ENCODE measurements at regions of chr12 and their contacts with region 1.

Region 1: DNA sequence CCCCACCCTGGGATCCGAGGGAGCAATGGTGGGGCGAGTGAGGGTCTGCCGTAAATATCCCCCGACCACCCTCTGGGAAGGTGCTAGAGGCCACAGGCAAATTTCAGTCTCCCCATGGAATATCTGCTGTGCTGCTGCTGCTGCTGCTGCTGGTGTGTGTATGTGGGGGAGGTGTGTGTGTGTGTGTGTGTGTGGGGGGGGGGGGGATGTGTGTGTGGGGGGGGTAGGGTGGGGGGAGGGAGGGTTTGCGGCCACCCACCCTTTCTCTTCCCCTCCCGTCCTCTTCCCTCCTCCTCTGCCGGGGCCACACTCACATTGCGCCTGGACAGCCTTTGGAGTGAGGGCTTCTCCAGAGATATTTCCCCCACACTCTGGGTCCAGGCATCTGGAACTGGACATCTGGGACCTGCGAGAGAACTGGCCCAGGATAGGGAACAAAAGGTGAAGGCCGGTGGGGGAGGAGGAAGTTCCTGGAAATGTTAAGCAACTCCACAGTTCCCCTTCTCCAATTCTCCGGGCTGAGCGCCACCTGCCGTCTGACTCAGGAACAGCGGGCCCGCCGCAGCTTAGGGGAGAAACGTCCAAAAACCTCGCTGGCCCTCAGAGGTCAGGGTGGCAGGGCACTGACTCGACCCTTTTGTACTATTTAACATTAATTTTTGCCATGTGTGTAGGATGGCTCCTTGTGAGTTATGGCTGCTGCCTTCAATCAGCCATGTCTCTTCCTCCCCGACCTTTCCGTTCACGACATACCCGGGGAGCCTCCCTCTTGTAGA is at the start of gene C1RL:
- DNase-seq: peak; percentile 87
- ATAC-seq: peak; percentile 47
- H3K4me3 Mint-ChIP-seq: peak within 1 kb of the TSS; percentile 88
- H3K27ac Mint-ChIP-seq: peak within 1 kb of the TSS; percentile 93
- H3K4me1 Mint-ChIP-seq: peaks cover 36% of the 10 kb centered on the region
- H3K27me3 Mint-ChIP-seq: no peaks in the 10 kb centered on the region
- CTCF ChIP-seq: peak; percentile 97
- total RNA-seq, gene C1RL: 10.5 to 11.8 TPM

Region 2: DNA sequence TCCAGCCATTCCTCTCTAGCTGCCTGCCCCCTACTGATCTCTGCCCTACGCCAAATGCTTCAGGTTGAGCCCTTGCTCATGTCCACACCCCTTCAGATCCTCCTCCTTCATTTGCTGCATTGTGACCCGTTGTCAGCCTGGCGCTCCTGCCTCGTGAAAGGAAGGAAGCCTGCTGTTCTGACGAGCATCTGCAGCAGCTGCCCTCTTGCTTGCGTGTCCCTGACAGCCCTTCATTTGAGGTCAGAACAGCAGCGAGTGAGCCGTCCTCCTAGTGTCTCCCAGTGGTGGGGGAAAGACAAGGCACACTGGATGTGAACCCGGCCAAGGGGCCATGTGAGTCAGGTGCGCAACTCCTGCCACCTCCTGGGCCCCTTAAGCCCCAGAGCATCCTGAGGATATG is 405.4 kb before region 1 on chr12:
- CTCF ChIA-PET with region 1: no interaction called
- POLR2A ChIA-PET with region 1: no interaction called
- intact Hi-C with region 1: no loop called
- DNase-seq: peak; percentile 43
- ATAC-seq: peak; percentile 38
- H3K4me3 Mint-ChIP-seq: no peak overlapping the region
- H3K27ac Mint-ChIP-seq: no peak overlapping the region
- H3K4me1 Mint-ChIP-seq: peaks cover 14% of the 10 kb centered on the region
- H3K27me3 Mint-ChIP-seq: peaks cover 46% of the 10 kb centered on the region
- CTCF ChIP-seq: no peak

Region 3: GRCh38 chr12:6978609-6979011 is 130.4 kb before region 1 on chr12:
- CTCF ChIA-PET with region 1: interaction called, 5 read pairs
- POLR2A ChIA-PET with region 1: interaction called, 12 read pairs
- intact Hi-C with region 1: no loop called
- DNase-seq: no peak
- ATAC-seq: no peak
- H3K4me3 Mint-ChIP-seq: no peak overlapping the region
- H3K27ac Mint-ChIP-seq: no peak overlapping the region
- H3K4me1 Mint-ChIP-seq: peaks cover 18% of the 10 kb centered on the region
- H3K27me3 Mint-ChIP-seq: no peaks in the 10 kb centered on the region
- CTCF ChIP-seq: no peak

Region 4: DNA sequence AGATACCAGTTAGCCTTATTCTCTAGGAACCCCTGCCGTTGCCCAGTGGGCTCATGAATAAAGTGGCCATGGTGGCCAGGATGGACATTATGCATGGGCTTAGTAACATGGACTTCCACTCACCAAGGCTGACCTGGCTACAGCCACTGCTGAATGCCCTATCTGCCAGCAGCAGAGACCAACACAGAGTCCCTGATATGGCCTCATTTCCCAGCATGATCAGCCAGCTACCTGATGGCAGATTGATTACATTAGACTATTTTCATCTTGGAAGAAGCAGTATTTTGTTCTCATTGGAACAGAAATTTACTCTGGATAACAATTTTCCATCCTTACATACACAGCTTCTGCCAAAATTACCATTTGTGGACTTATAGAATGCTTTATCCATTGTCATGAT is 74.5 kb before region 1 on chr12:
- CTCF ChIA-PET with region 1: interaction called, 10 read pairs
- POLR2A ChIA-PET with region 1: no interaction called
- intact Hi-C with region 1: no loop called
- DNase-seq: no peak
- ATAC-seq: no peak
- H3K4me3 Mint-ChIP-seq: no peak overlapping the region
- H3K27ac Mint-ChIP-seq: no peak overlapping the region
- H3K4me1 Mint-ChIP-seq: peaks cover 9% of the 10 kb centered on the region
- H3K27me3 Mint-ChIP-seq: no peaks in the 10 kb centered on the region
- CTCF ChIP-seq: no peak

Region 5: GRCh38 chr12:7092229-7092985 is 16.6 kb before region 1 on chr12 and contains the start of gene C1R:
- CTCF ChIA-PET with region 1: interaction called, 13 read pairs
- POLR2A ChIA-PET with region 1: interaction called, 5 read pairs
- intact Hi-C with region 1: no loop called
- DNase-seq: peak; percentile 81
- ATAC-seq: peak; percentile 86
- H3K4me3 Mint-ChIP-seq: peak within 1 kb of the TSS; percentile 75
- H3K27ac Mint-ChIP-seq: peak within 1 kb of the TSS; percentile 77
- H3K4me1 Mint-ChIP-seq: peaks cover 6% of the 10 kb centered on the region
- H3K27me3 Mint-ChIP-seq: no peaks in the 10 kb centered on the region
- CTCF ChIP-seq: peak; percentile 91
- total RNA-seq, gene C1R: 0.97 to 2.4 TPM

Region 6: DNA sequence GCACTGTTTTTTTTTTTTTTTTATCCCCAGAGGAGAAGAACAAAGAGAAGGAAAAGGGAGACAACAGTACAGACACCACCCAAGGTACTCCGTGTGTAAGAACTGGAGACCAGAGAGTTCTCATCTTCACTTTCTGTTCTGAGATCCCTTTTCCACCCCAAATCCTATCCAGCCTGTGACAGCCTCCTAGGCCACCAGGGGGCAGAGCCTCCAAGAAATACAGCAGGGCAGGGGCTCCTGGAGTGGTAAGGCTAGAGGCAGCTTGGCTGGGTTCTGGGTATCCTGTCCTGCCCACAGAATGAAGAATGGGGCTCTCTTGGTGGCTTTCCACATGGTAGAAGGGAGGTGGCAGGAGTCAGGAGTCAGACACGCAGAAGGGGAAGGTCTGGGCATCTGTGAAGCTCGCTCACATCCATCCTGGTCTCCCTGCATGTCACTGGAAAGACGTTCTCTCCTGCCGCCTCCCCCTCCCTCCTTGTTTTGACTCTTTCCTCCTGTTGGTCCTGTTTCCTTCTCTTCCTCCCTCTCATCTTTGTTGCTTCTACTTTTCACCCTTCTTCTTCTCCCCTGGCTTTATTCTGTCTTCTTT is 33.2 kb after region 1 on chr12:
- CTCF ChIA-PET with region 1: interaction called, 10 read pairs
- POLR2A ChIA-PET with region 1: interaction called, 5 read pairs
- intact Hi-C with region 1: no loop called
- DNase-seq: peak; percentile 71
- ATAC-seq: peak; percentile 90
- H3K4me3 Mint-ChIP-seq: no peak overlapping the region
- H3K27ac Mint-ChIP-seq: no peak overlapping the region
- H3K4me1 Mint-ChIP-seq: no peaks in the 10 kb centered on the region
- H3K27me3 Mint-ChIP-seq: no peaks in the 10 kb centered on the region
- CTCF ChIP-seq: peak; percentile 61

Measured in activated CD8-positive, alpha-beta T cell treated with anti-CD3 and anti-CD28 coated beads for 36 hours (primary cell).